Prostate gland (tissue), 2 donors: ENCODE measurements at regions of chr18 and their contacts with region 1.

Region 1: DNA sequence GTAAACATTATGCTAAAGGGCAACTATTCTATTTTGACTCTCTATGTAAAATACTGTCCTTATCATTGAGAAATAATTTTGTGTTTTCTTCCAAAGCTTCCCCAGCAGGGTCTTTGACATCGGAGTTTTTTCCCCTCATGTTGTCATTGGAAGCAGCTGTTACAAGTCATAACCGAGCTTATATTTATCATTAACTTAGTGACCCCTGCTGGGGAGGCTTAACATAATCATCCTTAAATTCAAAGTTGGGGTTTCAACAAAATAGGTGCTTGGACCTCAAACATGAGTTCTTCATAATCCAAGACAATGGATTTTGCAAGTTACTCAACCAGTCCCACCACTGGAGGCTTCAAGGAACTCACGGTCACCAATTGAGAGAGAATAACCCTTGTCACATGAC is 330.9 kb downstream of the DCC start:
- DNase-seq: peak; percentile 9
- H3K4me3 ChIP-seq: no peak overlapping the region
- H3K27ac ChIP-seq: no peak overlapping the region
- H3K4me1 ChIP-seq: no peaks in the 10 kb centered on the region
- H3K27me3 ChIP-seq: no peaks in the 10 kb centered on the region
- CTCF ChIP-seq: peak in 2 of 4 experiments; percentile 10 to 29
- POLR2A ChIP-seq: no peak

Region 2: GRCh38 chr18:52339891-52340371 is 331.0 kb before region 1 on chr18 and contains the start of gene DCC:
- intact Hi-C with region 1: loop called (anchors 5 kb)
- DNase-seq: peak; percentile 19
- H3K4me3 ChIP-seq: no peak within 1 kb of the TSS
- H3K27ac ChIP-seq: no peak within 1 kb of the TSS
- H3K4me1 ChIP-seq: no peaks in the 10 kb centered on the region
- H3K27me3 ChIP-seq: peaks cover 11% of the 10 kb centered on the region
- CTCF ChIP-seq: no peak
- POLR2A ChIP-seq: no peak
- total RNA-seq, gene DCC: 0.55 to 3.7 TPM